IMR-90 (cell line): ENCODE measurements at regions of chr7 and their contacts with region 1.

Region 1: DNA sequence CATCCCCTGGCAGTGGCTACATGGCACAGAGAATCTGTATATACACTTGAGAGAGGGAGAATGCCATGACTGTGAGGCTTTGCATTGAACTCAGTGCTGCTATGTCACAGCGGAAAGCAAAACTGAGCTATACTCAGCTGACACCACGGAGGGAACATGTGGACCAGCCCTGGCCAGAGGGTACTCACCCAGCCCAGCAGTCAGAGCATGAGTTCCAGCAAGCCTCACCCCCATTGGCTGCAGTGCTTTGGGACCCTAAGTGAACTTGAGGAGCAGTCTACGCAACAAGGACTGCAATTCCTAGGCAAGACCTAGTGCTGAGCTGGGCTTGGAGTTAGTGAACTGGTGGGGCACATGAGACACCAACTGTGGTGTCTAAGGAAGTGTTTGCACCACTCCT is 10.3 kb upstream of the AOC1 start:
- DNase-seq: no peak
- ATAC-seq: no peak
- H3K4me3 ChIP-seq: no peak overlapping the region
- H3K27ac ChIP-seq: no peak overlapping the region
- H3K4me1 ChIP-seq: peaks cover 4% of the 10 kb centered on the region; the same call in 1 of the 2 replicates
- H3K27me3 ChIP-seq: no peaks in the 10 kb centered on the region
- CTCF ChIP-seq: no peak
- POLR2A ChIP-seq: no peak
- RAD21 ChIP-seq: no peak

Region 2: GRCh38 chr7:150820578-150821198 is 21.3 kb before region 1 on chr7:
- CTCF ChIA-PET with region 1: no interaction called
- POLR2A ChIA-PET with region 1: no interaction called
- dilution Hi-C with region 1: no loop called
- in situ Hi-C with region 1: no loop called
- intact Hi-C with region 1: loop called (anchors 2 kb)
- DNase-seq: no peak
- ATAC-seq: no peak
- H3K4me3 ChIP-seq: no peak overlapping the region
- H3K27ac ChIP-seq: no peak overlapping the region
- H3K4me1 ChIP-seq: no peaks in the 10 kb centered on the region; the same call in 1 of the 2 replicates
- H3K27me3 ChIP-seq: no peaks in the 10 kb centered on the region
- CTCF ChIP-seq: no peak
- POLR2A ChIP-seq: no peak
- RAD21 ChIP-seq: no peak

Region 3: GRCh38 chr7:150937848-150938561 is 96.0 kb after region 1 on chr7:
- CTCF ChIA-PET with region 1: no interaction called
- POLR2A ChIA-PET with region 1: no interaction called
- dilution Hi-C with region 1: no loop called
- in situ Hi-C with region 1: no loop called
- intact Hi-C with region 1: no loop called
- DNase-seq: peak; percentile 58
- ATAC-seq: peak; percentile 80
- H3K4me3 ChIP-seq: no peak overlapping the region
- H3K27ac ChIP-seq: no peak overlapping the region
- H3K4me1 ChIP-seq: peaks cover 5% of the 10 kb centered on the region; the same call in 1 of the 2 replicates
- H3K27me3 ChIP-seq: no peaks in the 10 kb centered on the region; the same call in 1 of the 2 replicates
- CTCF ChIP-seq: no peak
- POLR2A ChIP-seq: no peak
- RAD21 ChIP-seq: no peak